T-cell (primary cell): ENCODE measurements at regions of chr18 and their contacts with region 1.

Region 1: DNA sequence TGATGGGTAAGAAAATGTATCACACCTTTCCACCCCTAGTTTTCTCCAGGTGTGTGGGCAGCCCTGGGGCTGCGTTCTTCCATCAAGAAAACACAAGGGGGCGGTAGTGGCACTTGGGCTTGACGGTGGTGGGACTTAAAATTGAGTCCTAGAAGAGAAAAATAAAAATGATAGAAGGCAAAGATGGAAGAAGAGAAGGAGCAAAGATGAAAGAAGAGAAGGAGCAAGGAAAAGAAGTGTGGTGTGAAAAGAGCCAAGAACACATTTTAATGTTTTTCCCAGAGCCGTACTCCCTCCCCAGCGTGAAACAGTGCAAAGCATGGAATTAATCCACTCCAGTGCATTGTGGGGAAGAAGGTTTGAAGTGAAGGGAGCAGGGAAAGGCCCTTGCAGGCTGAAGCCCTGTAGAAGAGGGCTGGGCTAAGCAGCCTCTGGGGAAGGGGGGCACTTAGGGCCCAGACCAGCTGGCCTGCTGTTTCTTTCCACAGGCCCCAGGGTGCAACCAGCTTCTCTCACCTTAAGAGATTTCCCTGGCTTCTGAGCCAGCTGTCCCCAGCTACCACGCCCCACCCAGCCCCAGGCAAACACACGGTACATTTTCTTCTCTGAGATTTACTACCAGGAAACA is 256.8 kb downstream of the RNF152 start:
- DNase-seq: peak in 26 of 35 experiments; percentile 4 to 51 (median 13)
- ATAC-seq: peak in 1 of 4 experiments; percentile 47
- H3K4me3 ChIP-seq: no peak overlapping the region
- H3K4me3 Mint-ChIP-seq: no peak overlapping the region
- H3K27ac ChIP-seq: no peak overlapping the region
- H3K27ac Mint-ChIP-seq: no peak overlapping the region
- H3K4me1 ChIP-seq: no peaks in the 10 kb centered on the region
- H3K4me1 Mint-ChIP-seq: no peaks in the 10 kb centered on the region
- H3K27me3 ChIP-seq: peaks cover 0 to 7% of the 10 kb centered on the region in 2 experiments
- H3K27me3 Mint-ChIP-seq: peaks cover 12 to 16% of the 10 kb centered on the region in 2 donors

Region 2: GRCh38 chr18:61669320-61669719 is 33.3 kb after region 1 on chr18:
- CTCF ChIA-PET with region 1: no interaction called
- POLR2A ChIA-PET with region 1: no interaction called
- DNase-seq: no peak
- ATAC-seq: no peak
- H3K4me3 ChIP-seq: no peak overlapping the region
- H3K4me3 Mint-ChIP-seq: no peak overlapping the region
- H3K27ac ChIP-seq: no peak overlapping the region
- H3K27ac Mint-ChIP-seq: no peak overlapping the region
- H3K4me1 ChIP-seq: no peaks in the 10 kb centered on the region
- H3K4me1 Mint-ChIP-seq: no peaks in the 10 kb centered on the region
- H3K27me3 ChIP-seq: no peaks in the 10 kb centered on the region
- H3K27me3 Mint-ChIP-seq: peaks cover 4 to 11% of the 10 kb centered on the region in 2 donors

Region 3: DNA sequence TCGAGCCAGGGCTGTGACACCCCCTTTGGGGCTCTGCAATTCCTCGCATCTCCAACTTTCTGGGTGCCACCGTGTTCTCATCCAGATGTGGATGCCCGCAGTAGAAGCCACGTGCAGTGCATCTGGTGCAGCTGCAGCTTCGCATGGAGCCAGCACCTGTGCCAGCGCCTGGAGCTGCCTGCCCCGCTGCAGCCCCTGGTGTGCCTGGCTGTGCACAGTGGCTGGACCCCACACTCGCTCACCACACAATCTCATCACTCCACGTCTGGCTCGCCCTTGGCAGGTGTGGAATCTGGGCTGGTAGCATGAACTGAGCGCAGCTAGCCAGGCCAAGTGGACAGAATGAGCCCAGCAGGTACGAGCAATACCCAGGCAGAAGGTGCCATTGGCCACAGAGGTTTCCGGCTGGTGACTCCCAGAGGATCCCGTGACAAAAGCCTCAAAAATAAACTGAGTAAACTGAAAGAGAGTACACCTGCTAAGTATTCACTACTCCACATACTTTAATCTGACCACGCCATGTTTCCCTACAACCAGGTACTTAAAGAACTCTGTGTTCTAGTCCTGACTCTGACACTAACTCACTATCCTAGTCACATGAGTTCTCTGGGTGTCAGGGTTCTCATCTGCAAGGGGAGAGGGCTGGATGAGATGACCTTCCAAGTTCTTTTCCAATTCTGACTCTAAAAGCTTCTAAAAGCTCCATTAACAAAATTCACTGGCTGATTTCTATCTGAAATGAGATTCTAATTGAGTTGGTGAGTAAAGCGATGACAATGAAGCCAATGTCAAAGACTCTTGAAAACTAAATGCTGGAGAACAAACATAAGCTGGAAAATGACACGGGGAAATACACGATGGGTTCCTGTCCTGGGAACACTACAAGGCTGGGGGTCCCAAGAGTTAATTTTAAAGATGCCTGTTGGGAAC is 219.7 kb after region 1 on chr18:
- CTCF ChIA-PET with region 1: no interaction called
- POLR2A ChIA-PET with region 1: no interaction called
- DNase-seq: no peak
- ATAC-seq: no peak
- H3K4me3 ChIP-seq: no peak overlapping the region
- H3K4me3 Mint-ChIP-seq: no peak overlapping the region
- H3K27ac ChIP-seq: no peak overlapping the region
- H3K27ac Mint-ChIP-seq: no peak overlapping the region
- H3K4me1 ChIP-seq: no peaks in the 10 kb centered on the region
- H3K4me1 Mint-ChIP-seq: no peaks in the 10 kb centered on the region
- H3K27me3 ChIP-seq: peaks cover 0 to 1% of the 10 kb centered on the region in 2 experiments
- H3K27me3 Mint-ChIP-seq: peaks cover 4 to 7% of the 10 kb centered on the region in 2 donors

Region 4: DNA sequence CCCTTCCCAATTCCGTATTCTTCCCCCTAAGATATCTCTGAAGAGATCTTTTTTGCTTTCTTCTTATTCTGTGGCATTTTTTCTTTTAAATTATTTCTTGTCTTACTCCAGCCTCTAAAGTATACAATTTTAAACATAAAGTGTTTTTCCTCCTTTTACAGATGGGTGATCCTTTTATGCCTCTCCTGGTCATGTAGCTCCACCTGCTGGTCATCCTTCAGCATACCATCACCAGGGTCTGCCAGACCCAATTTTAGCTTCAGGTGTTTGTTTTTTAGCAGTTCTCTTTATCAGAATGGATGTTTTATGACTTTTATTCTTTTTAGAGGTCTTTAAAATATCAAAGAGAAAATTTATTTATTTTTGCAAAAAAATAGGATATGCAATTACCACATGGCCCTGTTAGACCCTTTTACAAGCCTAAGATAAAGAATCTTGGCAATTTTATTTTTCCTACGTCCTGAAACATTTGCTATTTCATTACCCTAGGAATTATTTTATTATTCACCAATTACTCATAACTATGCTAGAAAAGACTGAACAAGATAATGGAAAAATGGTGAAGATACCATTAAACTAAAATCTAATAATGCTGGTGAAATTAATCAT is 495.4 kb after region 1 on chr18:
- CTCF ChIA-PET with region 1: interaction called in 1 of 2 experiments, 11 read pairs
- POLR2A ChIA-PET with region 1: no interaction called
- DNase-seq: peak; percentile 3 to 79 (median 50)
- ATAC-seq: peak; percentile 40 to 56 (median 51)
- H3K4me3 ChIP-seq: no peak overlapping the region
- H3K4me3 Mint-ChIP-seq: no peak overlapping the region
- H3K27ac ChIP-seq: no peak overlapping the region
- H3K27ac Mint-ChIP-seq: no peak overlapping the region
- H3K4me1 ChIP-seq: no peaks in the 10 kb centered on the region
- H3K4me1 Mint-ChIP-seq: no peaks in the 10 kb centered on the region
- H3K27me3 ChIP-seq: no peaks in the 10 kb centered on the region
- H3K27me3 Mint-ChIP-seq: no peaks in the 10 kb centered on the region